ENCODE measurements at regions of chr14 and their contacts with region 1.

Region 1: DNA sequence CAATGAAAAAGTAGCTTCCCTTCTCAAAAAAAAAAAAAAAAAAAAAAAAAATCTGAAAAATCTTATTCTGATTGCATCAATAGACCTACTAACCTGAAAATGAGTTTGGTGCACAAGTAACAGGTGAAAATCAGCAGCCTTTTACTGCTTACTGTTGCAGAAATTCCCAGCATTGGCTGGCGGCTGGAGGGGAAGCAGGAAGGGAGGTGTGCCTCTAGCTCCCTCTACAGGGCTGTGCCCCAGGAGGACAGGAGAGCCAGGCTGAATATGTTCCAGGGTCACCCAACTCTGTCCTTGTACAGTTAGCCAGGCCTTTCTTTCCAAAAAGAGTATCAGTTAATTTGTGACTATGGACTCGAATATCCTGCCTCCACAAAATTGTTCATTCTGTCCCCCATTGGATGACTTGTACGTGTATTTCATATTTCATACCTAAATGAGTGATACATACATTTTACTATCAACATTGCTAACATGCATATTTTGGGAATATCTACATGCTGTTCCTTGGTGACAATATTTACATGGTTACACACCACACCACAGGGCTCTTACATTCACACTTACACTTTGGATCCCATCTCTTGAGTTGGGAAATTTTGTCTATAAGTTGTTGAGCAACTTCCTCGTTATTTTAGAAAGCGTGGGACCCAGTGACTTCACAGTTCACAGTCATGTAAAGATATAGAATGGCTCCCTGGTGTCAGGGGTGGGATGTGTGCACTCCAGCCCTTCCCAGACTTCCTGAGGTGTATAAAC is 124.8 kb downstream of the SAMD4A start:
- DNase-seq: peak; percentile 74
- H3K4me3 ChIP-seq: no peak overlapping the region
- H3K27ac ChIP-seq: no peak overlapping the region
- H3K4me1 ChIP-seq: no peaks in the 10 kb centered on the region
- H3K27me3 ChIP-seq: no peaks in the 10 kb centered on the region
- CTCF ChIP-seq: peak; percentile 90

Region 2: GRCh38 chr14:54572316-54572715 is 119.4 kb before region 1 on chr14:
- CTCF ChIA-PET with region 1: interaction called, 11 read pairs
- POLR2A ChIA-PET with region 1: no interaction called
- intact Hi-C with region 1: no loop called
- DNase-seq: peak; percentile 67
- H3K4me3 ChIP-seq: no peak overlapping the region
- H3K27ac ChIP-seq: no peak overlapping the region
- H3K4me1 ChIP-seq: peaks cover 21% of the 10 kb centered on the region
- H3K27me3 ChIP-seq: no peaks in the 10 kb centered on the region
- CTCF ChIP-seq: peak; percentile 61

Region 3: GRCh38 chr14:54773171-54773975 is 81.7 kb after region 1 on chr14:
- CTCF ChIA-PET with region 1: no interaction called
- POLR2A ChIA-PET with region 1: no interaction called
- intact Hi-C with region 1: loop called (anchors 1 kb)
- DNase-seq: peak; percentile 97
- H3K4me3 ChIP-seq: no peak overlapping the region
- H3K27ac ChIP-seq: peak overlapping the region; percentile 70
- H3K4me1 ChIP-seq: peaks cover 27% of the 10 kb centered on the region
- H3K27me3 ChIP-seq: no peaks in the 10 kb centered on the region
- CTCF ChIP-seq: peak; percentile 64

Region 4: DNA sequence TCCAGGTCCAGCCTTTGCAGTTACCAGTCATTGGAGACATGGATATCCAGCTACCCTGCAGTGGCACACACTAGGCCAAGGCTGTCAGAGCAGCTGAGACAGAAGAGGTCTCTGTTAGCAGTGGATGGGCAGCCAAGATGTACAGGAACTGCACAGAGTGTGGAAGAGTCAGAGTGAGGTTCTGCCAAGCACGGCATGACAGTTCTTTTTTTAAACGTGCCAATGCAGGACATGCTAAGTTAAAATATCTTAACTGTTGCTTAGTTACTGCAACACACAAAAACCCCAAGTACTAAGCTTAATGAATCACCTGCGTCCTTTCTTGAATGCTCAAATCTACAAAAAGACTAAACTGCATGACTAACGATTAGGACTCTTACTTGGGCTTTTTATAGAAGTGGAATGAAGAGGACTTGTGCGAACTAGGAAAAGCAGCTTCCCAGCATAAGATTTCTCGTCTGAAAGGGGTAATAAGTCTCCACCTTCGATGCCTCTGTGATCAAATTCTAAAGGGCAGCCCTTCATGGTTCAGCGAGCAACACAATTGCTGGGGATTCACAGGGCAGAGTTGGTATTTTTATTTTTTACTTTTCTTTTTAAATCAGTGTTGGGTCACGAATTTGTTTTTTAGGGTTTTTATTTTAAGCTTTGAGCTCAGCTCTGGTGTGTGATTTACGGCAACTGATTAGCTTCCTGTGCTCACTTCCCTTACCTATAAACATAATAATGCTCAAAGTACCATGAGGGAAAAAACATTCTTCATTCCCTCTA is 380.4 kb after region 1 on chr14:
- CTCF ChIA-PET with region 1: no interaction called
- POLR2A ChIA-PET with region 1: no interaction called
- intact Hi-C with region 1: no loop called
- DNase-seq: no peak
- H3K4me3 ChIP-seq: no peak overlapping the region
- H3K27ac ChIP-seq: no peak overlapping the region
- H3K4me1 ChIP-seq: peaks cover 30% of the 10 kb centered on the region
- H3K27me3 ChIP-seq: no peaks in the 10 kb centered on the region
- CTCF ChIP-seq: no peak

Measured in A673 (cell line).